Right cardiac atrium (tissue), 5 donors: ENCODE measurements at regions of chr4 and their contacts with region 1.

Region 1: DNA sequence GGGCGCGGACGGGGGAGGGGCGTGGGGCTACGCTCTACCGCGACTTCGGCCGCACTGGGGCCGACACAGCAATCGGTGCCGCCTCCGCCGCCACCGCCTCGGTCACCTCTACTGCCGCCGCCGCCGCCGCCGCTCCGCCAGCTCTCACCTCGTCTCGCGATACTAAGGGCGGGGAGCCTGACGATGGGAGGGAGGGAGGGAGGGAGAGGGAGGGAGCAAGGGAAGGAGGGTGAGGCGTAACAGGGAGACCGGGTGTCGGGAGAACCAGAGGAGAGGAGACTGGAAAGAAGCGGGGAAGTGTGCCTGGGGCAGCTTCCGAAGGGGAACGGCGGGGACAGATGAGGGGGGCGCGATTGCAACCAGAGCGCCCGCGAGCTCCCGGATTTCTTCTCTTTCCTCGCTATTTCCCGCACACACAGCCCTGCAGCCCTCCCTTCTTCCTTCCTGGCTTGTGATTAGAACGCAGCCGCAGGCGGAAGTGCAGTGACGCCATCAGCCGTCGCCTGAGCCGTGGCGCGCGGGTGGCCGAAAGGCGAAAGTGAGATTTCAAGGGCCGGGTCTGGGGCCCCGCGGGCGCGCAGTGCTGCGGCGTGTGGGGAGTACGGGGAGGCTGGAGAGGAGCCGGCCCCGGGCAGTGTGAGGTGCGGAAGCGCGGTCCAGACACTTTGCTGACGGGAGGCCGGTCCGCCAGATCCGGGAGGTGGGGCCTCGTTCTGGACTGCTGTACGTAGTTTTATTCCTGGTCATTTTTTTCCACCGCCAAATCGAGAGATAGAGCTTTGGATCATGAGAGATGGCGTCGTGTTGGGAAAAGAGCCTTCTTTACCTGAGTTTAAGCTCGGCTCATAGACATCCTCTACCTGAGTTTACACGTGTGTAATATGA is at the start of gene ANKRD17:
- DNase-seq: peak; percentile 93 to 97 (median 97)
- ATAC-seq: peak; percentile 94 to 95
- H3K4me3 ChIP-seq: peak within 1 kb of the TSS; percentile 87
- H3K27ac ChIP-seq: peak within 1 kb of the TSS; percentile 97
- H3K4me1 ChIP-seq: no peaks in the 10 kb centered on the region
- H3K27me3 ChIP-seq: no peaks in the 10 kb centered on the region
- total RNA-seq, gene ANKRD17: 52.1 to 59.4 (median 53.7) TPM

Region 2: DNA sequence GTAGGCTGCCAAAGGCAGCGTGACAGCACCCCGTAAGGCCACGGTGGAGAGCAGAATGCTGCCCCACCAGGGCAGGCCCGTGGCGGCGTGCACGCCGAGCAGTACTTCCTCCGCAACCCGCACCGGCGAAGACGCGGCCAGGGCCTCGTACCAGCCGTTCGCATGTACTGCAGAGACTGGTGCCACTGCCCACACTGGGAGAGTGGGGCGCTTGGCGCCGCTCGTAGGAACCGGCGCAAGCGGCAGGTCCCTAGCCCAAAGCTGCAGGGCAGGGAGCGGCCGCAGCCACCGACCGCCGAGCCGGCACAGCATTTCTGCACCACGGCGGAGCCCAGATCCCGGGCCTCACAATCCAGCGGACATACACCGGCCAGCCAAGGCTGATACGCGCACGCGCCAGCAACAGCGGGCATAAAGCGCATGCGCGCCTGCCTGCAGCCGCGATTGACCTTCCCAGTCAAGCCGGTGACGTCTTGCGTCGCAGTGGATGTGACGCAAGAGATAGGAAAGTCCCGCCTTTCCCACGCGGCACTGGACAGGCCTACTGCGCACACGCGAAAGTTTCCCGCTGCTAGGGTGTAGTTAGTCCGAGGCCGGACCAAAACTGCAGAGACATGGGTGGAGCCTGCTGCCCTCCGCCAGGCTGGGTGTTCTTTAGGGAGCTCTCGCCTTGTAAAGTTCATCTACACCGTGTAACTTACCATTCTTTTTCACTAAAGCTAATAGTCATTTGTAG is 189.4 kb before region 1 on chr4 and contains the start of gene COX18:
- intact Hi-C with region 1: loop called in 3 of 4 experiments (anchors 5 kb)
- DNase-seq: peak; percentile 98 to 99 (median 99)
- ATAC-seq: peak; percentile 98
- H3K4me3 ChIP-seq: peak within 1 kb of the TSS; percentile 83
- H3K27ac ChIP-seq: peak within 1 kb of the TSS; percentile 98
- H3K4me1 ChIP-seq: no peaks in the 10 kb centered on the region
- H3K27me3 ChIP-seq: no peaks in the 10 kb centered on the region
- total RNA-seq, gene COX18: 14.6 to 16.0 (median 15.7) TPM

Region 3: DNA sequence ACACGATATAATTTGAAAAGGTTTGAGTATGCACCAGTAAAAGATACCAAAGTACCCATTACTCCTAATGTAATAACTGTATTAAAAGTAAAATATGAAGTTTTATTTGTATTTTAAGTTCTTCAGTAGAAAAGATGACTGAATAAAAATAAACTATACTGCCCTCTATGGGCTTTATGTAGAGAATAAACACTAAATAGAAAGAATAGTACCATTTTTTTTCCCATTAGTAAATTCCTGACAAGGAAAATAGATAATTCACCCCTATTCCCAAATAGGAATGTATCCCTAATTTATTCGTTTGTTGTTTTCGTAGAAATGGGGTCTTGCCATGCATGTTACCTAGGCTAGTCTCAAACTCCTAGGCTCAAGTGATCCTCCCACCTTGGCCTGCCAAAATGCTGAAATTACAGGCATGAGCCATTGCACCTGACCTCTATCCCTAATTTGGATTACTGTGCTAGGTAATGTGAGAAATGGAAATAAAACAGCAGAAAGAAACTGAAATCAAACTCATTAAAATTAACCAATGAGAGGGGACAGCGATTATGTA is 115.9 kb before region 1 on chr4:
- intact Hi-C with region 1: loop called in 2 of 4 experiments (anchors 10 kb)
- DNase-seq: no peak
- ATAC-seq: no peak
- H3K4me3 ChIP-seq: no peak overlapping the region
- H3K27ac ChIP-seq: no peak overlapping the region
- H3K4me1 ChIP-seq: no peaks in the 10 kb centered on the region
- H3K27me3 ChIP-seq: no peaks in the 10 kb centered on the region

Region 4: DNA sequence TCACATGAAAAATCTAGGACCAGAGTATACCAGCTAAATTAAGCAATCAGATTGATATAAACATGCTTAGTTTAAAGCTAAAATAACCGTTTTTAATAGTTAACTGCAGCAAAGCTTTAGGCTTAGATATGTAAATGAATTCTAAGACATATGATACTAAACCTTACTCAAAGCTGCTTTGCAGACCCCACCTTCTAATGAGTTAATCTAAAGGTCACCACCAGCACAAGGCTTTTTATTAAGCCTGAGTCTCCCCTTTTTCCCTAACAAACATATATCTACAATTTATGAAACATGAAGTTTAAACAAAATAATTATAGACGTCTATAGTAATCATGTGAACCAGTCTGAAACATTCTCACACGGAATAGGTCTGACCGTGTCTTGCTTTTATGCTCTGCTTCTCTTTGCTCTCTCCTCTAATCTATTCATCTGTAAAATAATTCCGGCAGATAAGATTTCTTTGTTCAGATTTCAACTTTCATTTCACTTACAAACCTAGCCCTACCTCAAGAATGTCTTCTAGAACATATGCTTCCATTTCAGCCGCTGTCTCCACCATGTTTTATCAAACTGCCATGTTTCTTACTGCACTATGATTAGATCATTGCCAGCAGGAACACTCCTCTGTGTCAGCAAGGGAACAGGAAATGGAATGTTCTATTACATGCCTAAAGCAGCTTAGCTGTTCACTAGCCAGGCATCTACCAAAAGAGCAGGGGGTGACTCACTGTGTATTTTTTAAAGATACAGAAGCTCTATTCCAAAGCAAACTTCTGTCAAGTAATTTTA is 36.3 kb before region 1 on chr4:
- intact Hi-C with region 1: loop called in 1 of 4 experiments (anchors 5 kb)
- DNase-seq: peak in 2 of 3 donors; percentile 28 to 43
- ATAC-seq: peak; percentile 100
- H3K4me3 ChIP-seq: peak overlapping the region; percentile 94
- H3K27ac ChIP-seq: no peak overlapping the region
- H3K4me1 ChIP-seq: peaks cover 1% of the 10 kb centered on the region
- H3K27me3 ChIP-seq: no peaks in the 10 kb centered on the region

Region 5: DNA sequence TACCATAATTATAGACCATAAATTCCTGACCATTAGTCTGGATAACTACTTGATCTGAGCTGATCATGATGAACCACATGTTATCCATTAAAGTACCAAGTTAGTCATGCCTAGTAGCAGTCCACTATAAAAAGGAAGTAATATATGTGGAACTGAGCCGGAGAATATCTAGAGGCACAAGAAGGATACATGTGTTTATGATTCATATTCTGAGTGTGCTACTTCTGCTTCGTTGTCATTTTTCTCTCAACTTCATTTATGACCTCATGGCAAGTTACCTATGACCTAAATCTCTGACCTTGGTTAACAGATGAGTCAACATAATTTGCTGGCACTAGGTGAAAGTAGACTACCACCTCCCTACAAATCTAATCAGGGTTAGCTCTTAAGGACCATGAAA is 56.2 kb after region 1 on chr4:
- intact Hi-C with region 1: no loop called
- DNase-seq: no peak
- ATAC-seq: no peak
- H3K4me3 ChIP-seq: no peak overlapping the region
- H3K27ac ChIP-seq: no peak overlapping the region
- H3K4me1 ChIP-seq: no peaks in the 10 kb centered on the region
- H3K27me3 ChIP-seq: no peaks in the 10 kb centered on the region